ENCODE measurements at regions of chr20 and their contacts with region 1.

Region 1: DNA sequence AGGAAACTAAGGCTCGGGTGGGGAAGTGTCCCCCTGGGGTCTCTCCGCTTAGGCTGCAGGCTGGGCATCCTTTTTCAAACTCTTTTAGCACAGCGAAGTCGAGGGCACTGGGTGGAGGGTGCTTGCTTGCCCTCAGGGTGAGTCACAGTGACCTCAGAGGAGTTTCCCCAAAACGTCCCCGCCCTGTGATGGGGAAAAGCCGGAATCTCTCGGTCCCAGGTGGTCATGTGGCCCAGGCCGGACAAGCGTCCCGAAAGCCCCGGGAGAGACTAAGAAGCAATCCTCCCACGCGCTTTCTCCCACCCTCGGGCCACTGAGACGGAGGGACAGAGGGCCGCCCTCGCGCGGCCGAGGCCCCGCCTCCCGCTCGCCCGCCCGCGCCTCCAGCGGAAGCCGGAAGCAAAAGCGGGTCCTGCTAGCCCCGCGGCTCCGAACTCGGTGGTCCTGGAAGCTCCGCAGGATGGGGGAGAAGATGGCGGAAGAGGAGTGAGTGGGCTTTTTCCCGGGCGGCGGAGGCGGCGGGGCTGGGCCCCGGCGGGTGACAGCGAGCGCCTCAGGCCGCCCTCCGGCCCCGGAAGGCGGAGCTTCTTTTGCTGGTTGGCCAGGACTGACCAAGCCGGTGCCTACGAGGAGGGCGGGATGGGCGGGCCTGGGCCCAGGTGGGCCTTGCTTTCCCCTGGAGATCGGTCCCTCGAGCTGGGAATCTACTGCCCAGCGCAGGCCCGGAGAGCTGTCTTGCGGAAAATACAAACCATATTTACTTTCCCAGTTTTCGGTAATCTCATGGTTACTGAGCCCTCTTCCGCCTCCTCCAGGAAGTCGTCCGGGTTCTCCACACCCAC is at the start of gene SLC9A8:
- DNase-seq: peak; percentile 85 to 94
- ATAC-seq: peak; percentile 88 to 94 (median 91)
- H3K4me3 ChIP-seq: peak within 1 kb of the TSS; percentile 65
- H3K4me3 Mint-ChIP-seq: peak within 1 kb of the TSS; percentile 94
- H3K27ac ChIP-seq: peak within 1 kb of the TSS; percentile 91
- H3K27ac Mint-ChIP-seq: peak within 1 kb of the TSS; percentile 85 to 93
- H3K4me1 ChIP-seq: peaks cover 17% of the 10 kb centered on the region
- H3K4me1 Mint-ChIP-seq: peaks cover 35 to 36% of the 10 kb centered on the region in 2 donors
- H3K27me3 ChIP-seq: no peaks in the 10 kb centered on the region
- H3K27me3 Mint-ChIP-seq: no peaks in the 10 kb centered on the region
- CTCF ChIP-seq: peak; percentile 8
- total RNA-seq, gene SLC9A8: 54.5 to 68.7 (median 58.8) TPM

Region 2: GRCh38 chr20:49713753-49714712 is 98.7 kb before region 1 on chr20 and contains the start of gene B4GALT5:
- intact Hi-C with region 1: loop called (anchors 5 kb)
- DNase-seq: peak; percentile 76 to 82
- ATAC-seq: peak; percentile 86 to 93 (median 90)
- H3K4me3 ChIP-seq: peak within 1 kb of the TSS; percentile 93
- H3K4me3 Mint-ChIP-seq: peak within 1 kb of the TSS; percentile 93
- H3K27ac ChIP-seq: peak within 1 kb of the TSS; percentile 81
- H3K27ac Mint-ChIP-seq: peak within 1 kb of the TSS; percentile 86 to 93
- H3K4me1 ChIP-seq: peaks cover 20% of the 10 kb centered on the region
- H3K4me1 Mint-ChIP-seq: peaks cover 42 to 45% of the 10 kb centered on the region in 2 donors
- H3K27me3 ChIP-seq: no peaks in the 10 kb centered on the region
- H3K27me3 Mint-ChIP-seq: no peaks in the 10 kb centered on the region
- CTCF ChIP-seq: no peak
- total RNA-seq, gene B4GALT5: 15.5 to 29.1 (median 28.6) TPM

Region 3: GRCh38 chr20:49775229-49775693 is 37.4 kb before region 1 on chr20:
- intact Hi-C with region 1: loop called (anchors 5 kb)
- DNase-seq: no peak
- ATAC-seq: no peak
- H3K4me3 ChIP-seq: no peak overlapping the region
- H3K4me3 Mint-ChIP-seq: no peak overlapping the region
- H3K27ac ChIP-seq: no peak overlapping the region
- H3K27ac Mint-ChIP-seq: peak overlapping the region in 1 of 2 donors; percentile 81
- H3K4me1 ChIP-seq: peaks cover 16% of the 10 kb centered on the region
- H3K4me1 Mint-ChIP-seq: peaks cover 9 to 17% of the 10 kb centered on the region in 2 donors
- H3K27me3 ChIP-seq: no peaks in the 10 kb centered on the region
- H3K27me3 Mint-ChIP-seq: no peaks in the 10 kb centered on the region
- CTCF ChIP-seq: no peak

Region 4: GRCh38 chr20:50133474-50134217 is 321.0 kb after region 1 on chr20:
- intact Hi-C with region 1: no loop called
- DNase-seq: no peak
- ATAC-seq: no peak
- H3K4me3 ChIP-seq: no peak overlapping the region
- H3K4me3 Mint-ChIP-seq: no peak overlapping the region
- H3K27ac ChIP-seq: no peak overlapping the region
- H3K27ac Mint-ChIP-seq: no peak overlapping the region
- H3K4me1 ChIP-seq: no peaks in the 10 kb centered on the region
- H3K4me1 Mint-ChIP-seq: peaks cover 15 to 22% of the 10 kb centered on the region in 2 donors
- H3K27me3 ChIP-seq: no peaks in the 10 kb centered on the region
- H3K27me3 Mint-ChIP-seq: no peaks in the 10 kb centered on the region
- CTCF ChIP-seq: no peak

Measured in natural killer cell (primary cell).